HepG2 (cell line): ENCODE measurements at regions of chr7 and their contacts with region 1.

Region 1: DNA sequence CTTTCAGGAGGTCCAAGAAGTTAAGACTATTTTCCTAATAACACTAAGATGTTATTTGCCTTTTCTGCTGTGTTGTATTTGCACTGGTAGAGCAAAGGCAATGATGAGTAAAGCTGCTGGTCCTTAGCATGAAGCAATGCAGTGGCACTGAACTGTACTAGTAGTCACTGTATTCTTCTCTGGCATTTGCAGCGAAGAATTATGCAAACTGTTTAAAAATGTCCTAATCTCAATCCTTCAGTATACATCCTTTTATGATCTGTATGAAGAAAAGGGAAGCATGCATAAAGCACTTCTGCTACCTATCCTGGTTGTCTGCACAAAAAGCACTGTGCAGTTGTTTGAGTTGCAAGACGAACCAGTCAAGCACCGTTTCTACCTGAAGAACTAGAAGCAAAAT is 20.4 kb downstream of the IGF2BP3 start:
- DNase-seq: no peak
- ATAC-seq: no peak
- H3K4me3 ChIP-seq: no peak overlapping the region
- H3K27ac ChIP-seq: no peak overlapping the region
- H3K4me1 ChIP-seq: peaks cover 15% of the 10 kb centered on the region
- H3K27me3 ChIP-seq: no peaks in the 10 kb centered on the region
- CTCF ChIP-seq: no peak
- EP300 ChIP-seq: no peak
- POLR2A ChIP-seq: no peak
- RAD21 ChIP-seq: no peak

Region 2: DNA sequence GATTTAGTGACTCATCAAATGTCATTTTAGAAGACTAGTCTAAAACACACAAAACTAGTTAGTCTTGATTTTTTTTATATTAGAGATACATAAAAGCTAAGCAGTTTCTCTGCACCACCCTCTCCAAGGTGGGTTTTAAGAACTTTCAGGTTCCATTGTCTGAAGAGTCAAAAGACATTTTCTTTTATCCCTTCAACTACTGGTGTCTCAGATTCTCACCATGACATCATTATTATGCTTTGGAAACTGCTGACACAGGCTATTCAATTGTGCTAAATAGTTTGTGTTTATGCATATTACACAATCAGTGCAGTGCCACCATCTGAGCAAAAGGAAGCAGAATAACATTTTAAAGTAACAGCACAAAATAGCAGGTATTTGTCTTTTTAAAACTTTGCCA is 31.9 kb before region 1 on chr7:
- CTCF ChIA-PET with region 1: no interaction called
- POLR2A ChIA-PET with region 1: no interaction called
- in situ Hi-C with region 1: no loop called
- intact Hi-C with region 1: no loop called
- DNase-seq: no peak
- ATAC-seq: no peak
- H3K4me3 ChIP-seq: no peak overlapping the region
- H3K27ac ChIP-seq: no peak overlapping the region
- H3K4me1 ChIP-seq: peaks cover 24% of the 10 kb centered on the region
- H3K27me3 ChIP-seq: no peaks in the 10 kb centered on the region
- CTCF ChIP-seq: no peak
- EP300 ChIP-seq: no peak
- POLR2A ChIP-seq: no peak
- RAD21 ChIP-seq: no peak

Region 3: DNA sequence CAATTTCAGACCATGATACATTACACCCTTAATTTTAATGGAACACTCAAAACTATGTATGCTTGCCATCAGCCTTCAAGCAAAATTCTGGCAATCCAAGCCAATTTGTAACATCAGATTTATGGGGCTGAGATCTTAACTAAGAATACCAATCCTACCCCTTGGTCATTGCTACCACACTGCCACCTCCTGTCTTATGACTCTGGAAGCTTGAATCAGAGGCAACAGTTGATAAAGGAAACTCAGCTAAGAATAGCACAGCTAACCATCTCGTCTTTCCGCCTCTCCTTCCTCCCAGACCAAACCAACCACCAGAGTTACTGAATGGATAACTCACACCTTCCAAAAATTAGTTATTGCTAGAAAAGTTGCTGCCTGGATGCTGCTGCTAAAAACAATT is 12.9 kb after region 1 on chr7:
- CTCF ChIA-PET with region 1: no interaction called
- POLR2A ChIA-PET with region 1: interaction called, 5 read pairs
- in situ Hi-C with region 1: no loop called
- intact Hi-C with region 1: loop called (anchors 2 kb)
- DNase-seq: no peak
- ATAC-seq: no peak
- H3K4me3 ChIP-seq: no peak overlapping the region
- H3K27ac ChIP-seq: no peak overlapping the region
- H3K4me1 ChIP-seq: peaks cover 66% of the 10 kb centered on the region
- H3K27me3 ChIP-seq: no peaks in the 10 kb centered on the region; a peak in 1 of 5 replicates
- CTCF ChIP-seq: peak; percentile 50
- EP300 ChIP-seq: no peak
- POLR2A ChIP-seq: no peak
- RAD21 ChIP-seq: no peak